T-cell (primary cell): ENCODE measurements at regions of chr5 and their contacts with region 1.

Region 1: GRCh38 chr5:151126199-151126645 is 31.4 kb downstream of the ANXA6 start:
- DNase-seq: peak; percentile 17 to 81 (median 60)
- ATAC-seq: peak; percentile 57 to 71 (median 62)
- H3K4me3 ChIP-seq: no peak overlapping the region
- H3K4me3 Mint-ChIP-seq: peak overlapping the region in 2 of 3 donors; percentile 35 to 56
- H3K27ac ChIP-seq: peak overlapping the region; percentile 56
- H3K27ac Mint-ChIP-seq: peak overlapping the region; percentile 85 to 86
- H3K4me1 ChIP-seq: peaks cover 13 to 36% of the 10 kb centered on the region in 2 experiments
- H3K4me1 Mint-ChIP-seq: peaks cover 49 to 67% (median 60%) of the 10 kb centered on the region in 3 donors
- H3K27me3 ChIP-seq: no peaks in the 10 kb centered on the region
- H3K27me3 Mint-ChIP-seq: no peaks in the 10 kb centered on the region

Region 2: GRCh38 chr5:150816946-150817345 is 309.3 kb before region 1 on chr5:
- CTCF ChIA-PET with region 1: no interaction called
- POLR2A ChIA-PET with region 1: no interaction called
- DNase-seq: no peak
- ATAC-seq: no peak
- H3K4me3 ChIP-seq: no peak overlapping the region
- H3K4me3 Mint-ChIP-seq: no peak overlapping the region
- H3K27ac ChIP-seq: no peak overlapping the region
- H3K27ac Mint-ChIP-seq: no peak overlapping the region
- H3K4me1 ChIP-seq: no peaks in the 10 kb centered on the region
- H3K4me1 Mint-ChIP-seq: no peaks in the 10 kb centered on the region
- H3K27me3 ChIP-seq: peaks cover 0 to 12% of the 10 kb centered on the region in 2 experiments
- H3K27me3 Mint-ChIP-seq: peaks cover 1 to 11% of the 10 kb centered on the region in 2 donors

Region 3: DNA sequence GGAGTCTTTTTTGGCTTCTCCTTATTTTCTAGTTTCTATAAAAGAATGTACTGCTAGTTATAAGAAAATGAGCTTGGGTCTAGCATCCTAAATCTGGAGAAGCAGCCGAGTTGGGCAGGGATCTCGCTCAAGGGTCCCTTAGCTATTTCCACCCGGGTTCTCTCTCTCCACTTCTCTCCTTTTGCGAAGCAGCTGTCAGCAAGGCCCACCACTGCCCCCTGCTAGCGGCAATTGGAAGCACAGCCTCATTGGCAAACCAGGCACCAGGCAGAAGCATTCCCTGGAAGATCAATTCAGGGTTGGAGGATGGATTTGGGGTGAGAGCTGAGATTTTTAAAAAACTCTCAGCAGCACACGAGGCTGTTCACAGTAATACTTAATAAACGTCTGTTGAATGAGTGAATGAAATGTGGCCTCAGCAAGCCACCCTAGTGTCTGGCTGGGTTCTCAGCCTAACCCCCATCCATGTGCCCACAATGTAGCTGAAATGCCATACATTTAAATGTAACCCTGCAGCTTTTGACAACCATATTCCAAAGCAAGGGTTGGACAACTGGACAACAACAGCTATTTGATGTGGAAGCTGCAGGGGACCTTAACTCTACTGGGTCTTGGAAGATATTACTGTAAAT is 10.8 kb before region 1 on chr5:
- CTCF ChIA-PET with region 1: interaction called, 16 to 28 read pairs
- POLR2A ChIA-PET with region 1: no interaction called
- DNase-seq: peak; percentile 29 to 81 (median 67)
- ATAC-seq: peak; percentile 78 to 90 (median 81)
- H3K4me3 ChIP-seq: no peak overlapping the region
- H3K4me3 Mint-ChIP-seq: no peak overlapping the region
- H3K27ac ChIP-seq: no peak overlapping the region
- H3K27ac Mint-ChIP-seq: peak overlapping the region in 1 of 2 donors; percentile 28
- H3K4me1 ChIP-seq: peaks cover 2 to 7% of the 10 kb centered on the region in 2 experiments
- H3K4me1 Mint-ChIP-seq: peaks cover 8 to 15% (median 13%) of the 10 kb centered on the region in 3 donors
- H3K27me3 ChIP-seq: no peaks in the 10 kb centered on the region
- H3K27me3 Mint-ChIP-seq: no peaks in the 10 kb centered on the region

Region 4: DNA sequence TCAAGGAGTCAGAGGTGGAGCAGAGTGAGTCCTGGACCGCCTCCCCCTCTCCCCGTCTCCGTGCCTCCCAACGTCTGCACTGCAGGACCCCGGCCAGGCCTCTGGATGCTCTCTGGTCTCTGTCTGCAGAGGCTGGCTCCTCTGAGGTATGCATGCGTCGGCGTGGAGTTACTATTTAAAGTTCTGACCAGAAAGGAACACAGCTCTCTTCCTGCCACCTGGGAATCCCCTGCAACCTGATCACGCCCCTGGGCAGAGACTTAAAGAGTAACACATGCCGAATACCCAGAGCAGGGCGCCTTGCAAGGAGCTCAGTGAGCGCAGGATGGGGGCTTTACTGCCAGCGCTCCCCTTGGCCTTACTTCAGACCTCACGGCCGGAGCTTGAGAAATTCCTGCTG is 15.3 kb after region 1 on chr5:
- CTCF ChIA-PET with region 1: interaction called, 13 to 26 read pairs
- POLR2A ChIA-PET with region 1: interaction called in 1 of 2 experiments, 7 read pairs
- DNase-seq: peak in 33 of 35 experiments; percentile 27 to 78 (median 56)
- ATAC-seq: peak; percentile 72 to 86 (median 82)
- H3K4me3 ChIP-seq: peak overlapping the region; percentile 15 to 52
- H3K4me3 Mint-ChIP-seq: peak overlapping the region; percentile 75 to 96 (median 77)
- H3K27ac ChIP-seq: peak overlapping the region; percentile 66
- H3K27ac Mint-ChIP-seq: peak overlapping the region; percentile 96 to 98
- H3K4me1 ChIP-seq: peaks cover 67 to 98% of the 10 kb centered on the region in 2 experiments
- H3K4me1 Mint-ChIP-seq: peaks cover 95 to 100% (median 97%) of the 10 kb centered on the region in 3 donors
- H3K27me3 ChIP-seq: no peaks in the 10 kb centered on the region
- H3K27me3 Mint-ChIP-seq: no peaks in the 10 kb centered on the region

Region 5: DNA sequence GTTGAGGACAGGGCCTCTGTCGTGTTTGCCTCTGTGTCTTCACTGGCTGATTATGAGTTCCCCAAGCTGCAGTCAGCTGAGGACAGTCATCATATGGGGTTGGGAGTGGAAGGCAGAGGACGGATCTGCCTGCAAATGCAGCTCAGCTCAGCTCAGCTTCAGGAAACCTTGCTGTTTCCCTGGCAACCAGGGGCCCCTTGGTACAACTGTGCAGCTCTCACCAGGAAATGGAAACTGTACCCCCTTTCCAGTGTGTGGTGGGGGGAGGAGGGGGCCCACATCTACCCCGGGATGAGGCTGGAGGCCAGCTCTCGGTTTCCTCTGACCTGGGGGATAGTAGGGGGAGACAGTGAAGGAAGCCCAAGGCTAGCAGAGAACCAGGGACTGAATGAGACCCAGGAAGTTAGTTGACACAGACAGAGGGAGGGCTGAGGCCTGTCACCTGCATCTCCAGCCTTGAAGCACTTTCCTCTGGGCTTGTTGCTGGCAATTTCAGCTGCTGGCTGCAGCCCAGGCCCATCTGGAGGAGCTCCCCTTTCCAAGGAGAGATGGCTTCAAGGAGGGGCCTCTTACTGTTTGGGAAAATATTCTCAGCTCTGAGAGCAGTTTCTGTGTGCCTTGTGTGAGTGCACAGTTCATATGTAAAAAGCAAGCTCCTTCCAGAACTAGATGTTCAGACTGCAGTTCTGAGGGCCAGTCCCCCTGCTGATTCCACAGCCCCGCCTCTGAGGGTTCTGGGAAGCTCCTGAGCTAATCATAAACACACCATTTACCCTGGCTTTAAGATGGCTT is 24.4 kb after region 1 on chr5:
- CTCF ChIA-PET with region 1: interaction called, 13 to 22 read pairs
- POLR2A ChIA-PET with region 1: interaction called in 1 of 2 experiments, 6 read pairs
- DNase-seq: peak; percentile 45 to 86 (median 77)
- ATAC-seq: peak; percentile 81 to 93 (median 86)
- H3K4me3 ChIP-seq: peak overlapping the region; percentile 12 to 68
- H3K4me3 Mint-ChIP-seq: peak overlapping the region; percentile 42 to 96 (median 52)
- H3K27ac ChIP-seq: peak overlapping the region; percentile 89
- H3K27ac Mint-ChIP-seq: peak overlapping the region; percentile 96 to 98
- H3K4me1 ChIP-seq: peaks cover 90 to 100% of the 10 kb centered on the region in 2 experiments
- H3K4me1 Mint-ChIP-seq: peaks cover 97 to 100% (median 99%) of the 10 kb centered on the region in 3 donors
- H3K27me3 ChIP-seq: no peaks in the 10 kb centered on the region
- H3K27me3 Mint-ChIP-seq: no peaks in the 10 kb centered on the region

Region 6: GRCh38 chr5:151157426-151158286 is 31.4 kb after region 1 on chr5 and contains the start of gene ANXA6:
- CTCF ChIA-PET with region 1: interaction called, 137 to 173 read pairs
- POLR2A ChIA-PET with region 1: no interaction called
- DNase-seq: peak; percentile 5 to 81 (median 46)
- ATAC-seq: peak; percentile 74 to 80 (median 78)
- H3K4me3 ChIP-seq: peak within 1 kb of the TSS; percentile 89 to 96
- H3K4me3 Mint-ChIP-seq: peak within 1 kb of the TSS; percentile 94 to 96 (median 95)
- H3K27ac ChIP-seq: peak within 1 kb of the TSS; percentile 89
- H3K27ac Mint-ChIP-seq: peak within 1 kb of the TSS; percentile 96 to 98
- H3K4me1 ChIP-seq: peaks cover 39 to 62% of the 10 kb centered on the region in 2 experiments
- H3K4me1 Mint-ChIP-seq: peaks cover 54 to 76% (median 62%) of the 10 kb centered on the region in 3 donors
- H3K27me3 ChIP-seq: no peaks in the 10 kb centered on the region
- H3K27me3 Mint-ChIP-seq: no peaks in the 10 kb centered on the region
- total RNA-seq, gene ANXA6: 266 to 395 (median 345) TPM

Region 7: GRCh38 chr5:151239237-151239861 is 113.1 kb after region 1 on chr5:
- CTCF ChIA-PET with region 1: interaction called, 3 to 13 read pairs
- POLR2A ChIA-PET with region 1: no interaction called
- DNase-seq: peak in 26 of 35 experiments; percentile 13 to 66 (median 42)
- ATAC-seq: peak; percentile 53 to 79 (median 65)
- H3K4me3 ChIP-seq: no peak overlapping the region
- H3K4me3 Mint-ChIP-seq: peak overlapping the region in 1 of 3 donors; percentile 4
- H3K27ac ChIP-seq: no peak overlapping the region
- H3K27ac Mint-ChIP-seq: peak overlapping the region in 1 of 2 donors; percentile 16
- H3K4me1 ChIP-seq: peaks cover 11 to 30% of the 10 kb centered on the region in 2 experiments
- H3K4me1 Mint-ChIP-seq: peaks cover 23 to 35% (median 32%) of the 10 kb centered on the region in 3 donors
- H3K27me3 ChIP-seq: peaks cover 0 to 3% of the 10 kb centered on the region in 2 experiments
- H3K27me3 Mint-ChIP-seq: no peaks in the 10 kb centered on the region